Activated CD4-positive, alpha-beta memory T cell treated with anti-CD3 and anti-CD28 coated beads for 36 hours (primary cell): ENCODE measurements at regions of chr3 and their contacts with region 1.

Region 1: GRCh38 chr3:15405448-15406050 is 21.8 kb downstream of the METTL6 start:
- DNase-seq: no peak
- H3K4me3 Mint-ChIP-seq: no peak overlapping the region
- H3K27ac Mint-ChIP-seq: no peak overlapping the region
- H3K4me1 Mint-ChIP-seq: peaks cover 3% of the 10 kb centered on the region
- H3K27me3 Mint-ChIP-seq: no peaks in the 10 kb centered on the region

Region 2: DNA sequence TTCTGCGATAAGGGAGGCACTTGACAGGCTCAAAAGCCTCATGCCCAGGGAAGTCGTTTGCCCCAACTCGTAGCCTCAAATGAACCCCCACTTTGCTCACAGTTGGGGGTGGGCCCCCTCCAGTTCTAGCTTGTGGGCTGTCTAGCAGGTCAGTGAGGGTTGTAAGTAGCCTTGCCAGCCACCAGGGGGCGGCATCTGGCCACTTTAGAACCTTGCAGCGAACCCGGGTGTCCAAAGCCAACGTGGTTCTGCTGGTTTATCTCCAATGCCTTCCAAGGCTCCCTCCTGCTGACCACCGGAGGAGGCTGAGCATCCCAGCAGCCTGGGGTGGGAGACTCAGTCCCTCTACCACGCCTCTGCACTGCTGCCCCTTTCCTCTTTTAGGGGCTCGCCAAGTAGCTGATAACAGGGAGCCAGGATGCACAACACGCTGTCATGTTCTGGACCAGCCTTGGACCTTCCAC is 297.4 kb before region 1 on chr3:
- CTCF ChIA-PET with region 1: interaction called, 10 read pairs
- POLR2A ChIA-PET with region 1: no interaction called
- intact Hi-C with region 1: loop called (anchors 10 kb)
- DNase-seq: peak; percentile 80
- H3K4me3 Mint-ChIP-seq: peak overlapping the region; percentile 5
- H3K27ac Mint-ChIP-seq: no peak overlapping the region
- H3K4me1 Mint-ChIP-seq: no peaks in the 10 kb centered on the region
- H3K27me3 Mint-ChIP-seq: peaks cover 6% of the 10 kb centered on the region

Region 3: DNA sequence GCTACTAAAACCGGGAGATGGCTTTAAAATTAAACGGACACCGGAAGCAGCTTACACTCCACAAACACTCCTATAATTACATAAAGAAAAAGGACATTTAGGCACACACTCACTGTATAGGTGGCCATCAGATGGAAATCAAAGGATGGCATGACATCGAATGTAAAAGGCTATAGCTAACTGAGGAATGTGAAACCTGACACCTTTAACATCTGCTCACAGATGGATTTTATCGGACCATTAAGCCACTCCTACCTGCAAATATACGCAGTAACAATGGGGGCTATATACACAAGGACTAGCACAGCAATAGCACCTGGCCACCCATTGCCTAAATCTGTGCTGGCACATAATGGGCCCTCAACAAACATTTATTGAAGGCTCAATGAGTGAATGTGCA is 292.1 kb before region 1 on chr3:
- CTCF ChIA-PET with region 1: interaction called, 10 read pairs
- POLR2A ChIA-PET with region 1: no interaction called
- intact Hi-C with region 1: loop called (anchors 10 kb)
- DNase-seq: no peak
- H3K4me3 Mint-ChIP-seq: no peak overlapping the region
- H3K27ac Mint-ChIP-seq: no peak overlapping the region
- H3K4me1 Mint-ChIP-seq: peaks cover under 1% of the 10 kb centered on the region
- H3K27me3 Mint-ChIP-seq: no peaks in the 10 kb centered on the region

Region 4: DNA sequence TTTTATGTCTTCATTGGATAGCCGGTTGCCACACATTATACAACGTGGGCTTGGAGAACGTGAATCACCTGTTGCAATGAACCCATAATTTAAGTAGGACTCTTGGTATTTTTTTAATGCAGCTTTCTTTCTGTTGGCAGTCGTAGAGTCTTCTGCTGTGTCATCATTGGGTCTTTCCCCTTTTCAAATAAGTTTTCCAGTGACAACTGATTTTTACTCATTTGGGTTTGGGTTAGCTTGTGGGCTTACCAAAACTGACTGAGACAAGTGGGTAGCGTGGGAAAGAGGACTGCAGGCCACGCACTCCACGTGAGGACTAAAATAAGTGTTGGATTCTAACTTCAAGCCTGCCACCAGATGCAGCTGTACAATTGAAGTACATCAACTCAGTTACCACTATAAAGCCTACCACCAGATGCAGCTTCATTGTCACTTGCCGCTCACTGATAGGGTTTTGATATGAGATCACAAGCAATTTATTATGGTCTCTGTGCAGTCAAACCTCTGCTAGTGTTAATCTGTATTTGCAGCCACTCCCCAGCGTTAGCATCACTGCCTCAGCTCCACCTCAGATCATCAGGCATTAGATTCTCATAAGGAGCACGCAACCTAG is 205.9 kb before region 1 on chr3:
- CTCF ChIA-PET with region 1: interaction called, 123 read pairs
- POLR2A ChIA-PET with region 1: no interaction called
- intact Hi-C with region 1: loop called (anchors 1 kb)
- DNase-seq: peak; percentile 36
- H3K4me3 Mint-ChIP-seq: no peak overlapping the region
- H3K27ac Mint-ChIP-seq: no peak overlapping the region
- H3K4me1 Mint-ChIP-seq: peaks cover 19% of the 10 kb centered on the region
- H3K27me3 Mint-ChIP-seq: no peaks in the 10 kb centered on the region

Region 5: DNA sequence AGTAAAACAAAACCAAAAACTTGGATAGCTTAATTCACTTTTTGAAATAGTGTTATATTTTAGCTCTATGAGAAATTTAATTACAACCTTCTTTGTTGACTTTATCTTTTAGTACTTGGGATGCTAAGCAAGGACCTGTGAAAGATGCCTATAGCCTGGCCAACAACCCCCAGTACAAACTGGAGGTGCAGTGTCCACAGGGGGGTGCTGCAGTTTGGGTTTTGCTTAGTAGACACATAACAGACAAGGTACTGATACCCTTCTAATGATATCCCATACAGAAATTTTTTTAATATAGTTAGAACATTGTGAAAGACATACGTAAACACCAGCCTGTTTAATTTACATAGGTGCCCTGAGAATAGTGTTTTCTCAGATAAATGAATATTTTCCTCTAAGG is 164.2 kb before region 1 on chr3:
- CTCF ChIA-PET with region 1: interaction called, 31 read pairs
- POLR2A ChIA-PET with region 1: no interaction called
- intact Hi-C with region 1: no loop called
- DNase-seq: peak; percentile 69
- H3K4me3 Mint-ChIP-seq: no peak overlapping the region
- H3K27ac Mint-ChIP-seq: no peak overlapping the region
- H3K4me1 Mint-ChIP-seq: peaks cover 7% of the 10 kb centered on the region
- H3K27me3 Mint-ChIP-seq: no peaks in the 10 kb centered on the region

Region 6: DNA sequence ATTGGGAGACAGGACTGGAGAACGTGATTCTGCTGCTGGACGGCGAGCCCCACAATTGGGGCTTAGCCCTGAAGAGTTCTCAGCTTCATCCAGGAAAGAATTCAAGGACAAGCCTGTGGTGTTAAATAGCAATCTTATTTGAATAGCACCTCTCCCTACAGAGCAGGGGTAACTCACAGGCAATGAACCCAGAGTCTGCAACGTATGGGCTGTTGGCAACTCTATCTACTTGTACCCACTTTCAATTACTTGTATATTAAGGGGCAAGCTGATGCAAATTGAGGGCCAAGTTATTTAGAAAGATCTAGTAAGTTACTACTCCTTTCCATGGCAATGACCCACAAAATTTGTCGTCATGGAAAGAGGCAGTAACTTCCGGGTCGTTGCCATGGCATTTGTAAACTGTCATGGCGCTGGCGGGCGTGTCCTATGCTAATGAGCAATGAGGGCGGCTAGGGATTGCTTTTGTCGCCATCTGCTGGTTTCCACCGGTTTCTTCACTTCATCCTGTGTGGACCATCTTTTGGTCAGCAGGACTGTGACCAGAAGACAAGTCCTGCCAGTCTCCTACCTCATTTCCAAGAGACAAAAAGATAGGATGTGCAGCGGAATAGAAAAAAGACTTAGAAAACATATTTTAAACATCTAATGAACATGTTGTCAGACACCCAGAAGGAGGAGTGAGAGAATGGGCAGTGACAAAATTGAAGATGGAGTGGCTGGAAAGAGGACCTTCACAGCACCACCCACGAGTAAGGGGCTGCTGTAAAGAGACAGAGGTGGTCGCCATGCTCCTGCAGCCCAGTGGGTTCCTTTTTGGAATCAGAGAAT is 27.4 kb before region 1 on chr3:
- CTCF ChIA-PET with region 1: interaction called, 10 read pairs
- POLR2A ChIA-PET with region 1: no interaction called
- intact Hi-C with region 1: no loop called
- DNase-seq: peak; percentile 97
- H3K4me3 Mint-ChIP-seq: peak overlapping the region; percentile 20
- H3K27ac Mint-ChIP-seq: peak overlapping the region; percentile 79
- H3K4me1 Mint-ChIP-seq: peaks cover 18% of the 10 kb centered on the region
- H3K27me3 Mint-ChIP-seq: no peaks in the 10 kb centered on the region

Region 7: GRCh38 chr3:15557511-15557946 is 152.0 kb after region 1 on chr3:
- CTCF ChIA-PET with region 1: interaction called, 14 read pairs
- POLR2A ChIA-PET with region 1: no interaction called
- intact Hi-C with region 1: no loop called
- DNase-seq: peak; percentile 75
- H3K4me3 Mint-ChIP-seq: no peak overlapping the region
- H3K27ac Mint-ChIP-seq: no peak overlapping the region
- H3K4me1 Mint-ChIP-seq: peaks cover 21% of the 10 kb centered on the region
- H3K27me3 Mint-ChIP-seq: no peaks in the 10 kb centered on the region